Colonic mucosa (tissue), 4 donors: ENCODE measurements at regions of chr13 and their contacts with region 1.

Region 1: DNA sequence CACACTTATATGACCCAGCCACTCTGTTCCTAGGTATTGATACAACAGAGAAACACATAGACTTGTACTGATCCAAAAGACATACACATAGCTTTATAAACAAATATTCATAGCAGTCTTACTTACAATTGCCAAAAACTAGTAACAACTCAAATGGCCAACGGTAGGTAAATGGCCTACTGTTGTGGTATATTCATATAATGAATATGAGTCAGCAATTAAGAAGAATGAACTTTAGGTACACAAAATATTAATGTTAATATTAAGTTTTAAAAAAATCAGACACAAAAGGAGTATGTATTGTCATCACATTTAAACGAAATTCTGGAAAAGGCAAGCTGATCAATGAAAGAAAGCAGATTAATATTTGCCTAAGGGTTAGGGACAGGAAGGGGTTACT is 19.7 kb downstream of the KPNA3 start:
- DNase-seq: no peak
- H3K4me3 ChIP-seq: no peak overlapping the region
- H3K27ac ChIP-seq: no peak overlapping the region
- H3K4me1 ChIP-seq: no peaks in the 10 kb centered on the region
- H3K27me3 ChIP-seq: no peaks in the 10 kb centered on the region
- CTCF ChIP-seq: no peak

Region 2: DNA sequence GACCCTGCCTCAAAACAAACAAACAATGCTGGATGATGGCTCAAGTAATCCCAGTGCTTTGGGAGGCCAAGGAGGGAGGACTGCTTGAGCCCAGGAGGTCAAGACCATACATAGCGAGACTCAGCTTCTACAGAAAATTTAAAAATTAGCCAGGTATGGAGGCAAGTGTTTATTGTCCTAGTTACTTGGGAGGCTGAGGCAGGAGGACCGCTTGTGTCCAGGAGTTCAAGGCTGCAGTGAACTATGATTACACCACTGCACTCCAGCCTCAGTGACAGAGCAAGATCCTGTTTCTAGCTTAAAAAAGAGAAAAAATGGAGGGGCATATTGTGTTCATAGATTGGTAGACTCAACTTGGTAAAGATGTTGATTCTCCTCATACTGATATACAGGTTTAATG is 16.6 kb before region 1 on chr13:
- intact Hi-C with region 1: loop called (anchors 2 kb)
- DNase-seq: no peak
- H3K4me3 ChIP-seq: no peak overlapping the region
- H3K27ac ChIP-seq: no peak overlapping the region
- H3K4me1 ChIP-seq: no peaks in the 10 kb centered on the region
- H3K27me3 ChIP-seq: no peaks in the 10 kb centered on the region
- CTCF ChIP-seq: no peak